PC-3 (cell line): ENCODE measurements at regions of chr17 and their contacts with region 1.

Region 1: GRCh38 chr17:30093463-30094147 is 23.0 kb upstream of the NSRP1 start:
- DNase-seq: peak; percentile 75
- ATAC-seq: peak; percentile 71
- H3K4me3 ChIP-seq: no peak overlapping the region
- H3K27ac ChIP-seq: no peak overlapping the region
- H3K4me1 ChIP-seq: no peaks in the 10 kb centered on the region
- H3K27me3 ChIP-seq: peaks cover 3% of the 10 kb centered on the region; the same call in 1 of the 2 replicates
- CTCF ChIP-seq: peak; percentile 77

Region 2: GRCh38 chr17:29807520-29808351 is 285.9 kb before region 1 on chr17:
- CTCF ChIA-PET with region 1: no interaction called
- POLR2A ChIA-PET with region 1: no interaction called
- intact Hi-C with region 1: loop called (anchors 5 kb)
- DNase-seq: peak; percentile 63
- ATAC-seq: no peak; the same call in 1 of the 2 replicates
- H3K4me3 ChIP-seq: no peak overlapping the region
- H3K27ac ChIP-seq: no peak overlapping the region
- H3K4me1 ChIP-seq: no peaks in the 10 kb centered on the region
- H3K27me3 ChIP-seq: no peaks in the 10 kb centered on the region
- CTCF ChIP-seq: peak; percentile 68

Region 3: DNA sequence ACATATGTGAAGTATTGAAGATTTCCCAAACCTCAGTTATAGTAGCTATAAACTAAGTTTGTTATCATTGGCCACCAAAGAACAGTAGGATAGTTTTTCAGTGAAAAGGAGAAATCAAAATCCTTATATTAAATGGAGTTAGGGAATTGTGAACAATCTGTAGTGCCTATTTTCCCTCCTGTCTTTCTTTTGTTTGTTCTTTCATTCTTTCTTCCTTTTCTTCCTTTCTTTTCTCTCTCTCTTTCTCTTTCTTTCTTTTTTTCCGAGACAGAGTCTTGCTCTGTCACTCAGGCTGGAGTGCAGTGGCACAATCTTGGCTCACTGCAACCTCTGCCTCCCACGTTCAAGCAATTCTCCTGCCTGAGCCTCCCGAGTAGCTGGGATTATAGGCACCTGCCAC is 212.3 kb before region 1 on chr17:
- CTCF ChIA-PET with region 1: no interaction called
- POLR2A ChIA-PET with region 1: interaction called, 13 read pairs
- intact Hi-C with region 1: no loop called
- DNase-seq: no peak
- ATAC-seq: no peak
- H3K4me3 ChIP-seq: no peak overlapping the region
- H3K27ac ChIP-seq: no peak overlapping the region
- H3K4me1 ChIP-seq: no peaks in the 10 kb centered on the region
- H3K27me3 ChIP-seq: no peaks in the 10 kb centered on the region
- CTCF ChIP-seq: no peak

Region 4: DNA sequence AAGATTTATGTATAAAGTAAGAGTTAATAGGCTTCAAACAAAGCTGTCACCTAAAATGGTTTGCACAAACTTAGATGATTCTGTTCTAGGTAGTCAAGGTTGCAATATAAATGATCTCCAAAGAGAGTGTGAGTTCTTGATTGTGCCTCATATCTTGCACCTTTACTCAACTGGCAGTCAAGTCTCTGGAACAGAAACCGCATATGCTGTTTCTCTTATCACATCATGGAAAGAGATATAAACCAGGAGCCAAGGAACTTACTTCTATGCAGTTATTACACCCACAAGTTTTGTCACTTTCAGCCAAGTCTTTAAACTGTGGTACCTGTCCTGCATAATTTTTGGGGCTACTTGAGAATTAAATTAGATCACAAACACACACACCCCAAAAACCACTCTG is 168.8 kb before region 1 on chr17:
- CTCF ChIA-PET with region 1: no interaction called
- POLR2A ChIA-PET with region 1: no interaction called
- intact Hi-C with region 1: no loop called
- DNase-seq: no peak
- ATAC-seq: no peak
- H3K4me3 ChIP-seq: no peak overlapping the region
- H3K27ac ChIP-seq: no peak overlapping the region
- H3K4me1 ChIP-seq: peaks cover 12% of the 10 kb centered on the region; the same call in 1 of the 2 replicates
- H3K27me3 ChIP-seq: no peaks in the 10 kb centered on the region
- CTCF ChIP-seq: no peak

Region 5: GRCh38 chr17:30021708-30022317 is 71.8 kb before region 1 on chr17:
- CTCF ChIA-PET with region 1: no interaction called
- POLR2A ChIA-PET with region 1: no interaction called
- intact Hi-C with region 1: loop called (anchors 2 kb)
- DNase-seq: peak; percentile 54
- ATAC-seq: no peak
- H3K4me3 ChIP-seq: no peak overlapping the region
- H3K27ac ChIP-seq: no peak overlapping the region
- H3K4me1 ChIP-seq: no peaks in the 10 kb centered on the region
- H3K27me3 ChIP-seq: no peaks in the 10 kb centered on the region
- CTCF ChIP-seq: peak; percentile 76